ENCODE measurements at regions of chr5 and their contacts with region 1.

Region 1: GRCh38 chr5:69189162-69190086 is at the start of gene CENPH:
- DNase-seq: peak; percentile 88 to 92
- ATAC-seq: peak; percentile 97 to 100 (median 98)
- H3K4me3 ChIP-seq: peak within 1 kb of the TSS; percentile 84
- H3K27ac ChIP-seq: peak within 1 kb of the TSS; percentile 57
- H3K4me1 ChIP-seq: peaks cover 6% of the 10 kb centered on the region
- H3K27me3 ChIP-seq: no peaks in the 10 kb centered on the region
- CTCF ChIP-seq: no peak
- total RNA-seq, gene CENPH: 1.6 to 4.5 (median 2.8) TPM

Region 2: DNA sequence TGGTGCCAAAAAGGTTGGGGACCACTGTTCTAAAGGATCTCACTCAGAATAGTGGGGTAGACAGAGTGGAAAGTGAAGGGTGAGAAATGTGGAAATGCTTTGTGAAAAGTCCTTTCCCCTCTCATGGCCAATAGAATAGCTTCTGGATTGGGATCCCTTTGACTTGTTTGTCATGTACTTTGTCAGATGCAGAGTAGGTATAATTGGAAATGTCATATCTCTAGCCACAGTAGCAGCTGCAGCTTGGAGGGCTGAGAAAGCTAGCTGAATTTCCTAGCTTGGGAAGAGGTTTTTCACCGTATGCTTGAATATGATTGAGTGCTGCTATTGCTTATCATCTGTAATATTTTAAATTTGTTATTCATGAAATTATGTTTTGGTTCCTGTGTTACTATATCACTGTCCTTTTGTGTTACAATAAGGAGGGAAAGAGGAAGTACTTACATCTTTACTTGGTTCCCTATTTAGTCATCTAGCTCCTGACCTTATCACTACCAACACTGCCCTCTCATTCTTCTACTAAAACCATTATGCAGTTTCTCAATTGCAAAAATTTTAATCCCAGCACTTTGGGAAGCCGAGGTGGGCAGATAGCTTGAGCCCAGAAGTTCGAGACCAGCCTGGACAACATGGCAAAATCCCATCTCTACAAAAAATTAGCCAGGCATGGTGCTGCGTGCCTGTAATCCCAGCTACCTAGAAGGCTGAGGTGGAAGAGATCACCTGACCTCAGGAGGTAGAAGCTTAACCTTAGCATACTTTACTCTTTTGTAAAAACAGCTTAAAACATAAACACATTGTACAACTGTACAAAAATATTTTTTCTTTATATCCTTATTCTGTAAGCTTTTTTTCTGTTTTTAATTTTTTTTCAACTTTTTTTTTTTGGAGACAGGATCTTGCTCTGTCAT is 83.2 kb before region 1 on chr5:
- intact Hi-C with region 1: loop called in 1 of 2 experiments (anchors 10 kb)
- DNase-seq: no peak
- ATAC-seq: no peak
- H3K4me3 ChIP-seq: no peak overlapping the region
- H3K27ac ChIP-seq: no peak overlapping the region
- H3K4me1 ChIP-seq: no peaks in the 10 kb centered on the region
- H3K27me3 ChIP-seq: no peaks in the 10 kb centered on the region
- CTCF ChIP-seq: no peak

Region 3: DNA sequence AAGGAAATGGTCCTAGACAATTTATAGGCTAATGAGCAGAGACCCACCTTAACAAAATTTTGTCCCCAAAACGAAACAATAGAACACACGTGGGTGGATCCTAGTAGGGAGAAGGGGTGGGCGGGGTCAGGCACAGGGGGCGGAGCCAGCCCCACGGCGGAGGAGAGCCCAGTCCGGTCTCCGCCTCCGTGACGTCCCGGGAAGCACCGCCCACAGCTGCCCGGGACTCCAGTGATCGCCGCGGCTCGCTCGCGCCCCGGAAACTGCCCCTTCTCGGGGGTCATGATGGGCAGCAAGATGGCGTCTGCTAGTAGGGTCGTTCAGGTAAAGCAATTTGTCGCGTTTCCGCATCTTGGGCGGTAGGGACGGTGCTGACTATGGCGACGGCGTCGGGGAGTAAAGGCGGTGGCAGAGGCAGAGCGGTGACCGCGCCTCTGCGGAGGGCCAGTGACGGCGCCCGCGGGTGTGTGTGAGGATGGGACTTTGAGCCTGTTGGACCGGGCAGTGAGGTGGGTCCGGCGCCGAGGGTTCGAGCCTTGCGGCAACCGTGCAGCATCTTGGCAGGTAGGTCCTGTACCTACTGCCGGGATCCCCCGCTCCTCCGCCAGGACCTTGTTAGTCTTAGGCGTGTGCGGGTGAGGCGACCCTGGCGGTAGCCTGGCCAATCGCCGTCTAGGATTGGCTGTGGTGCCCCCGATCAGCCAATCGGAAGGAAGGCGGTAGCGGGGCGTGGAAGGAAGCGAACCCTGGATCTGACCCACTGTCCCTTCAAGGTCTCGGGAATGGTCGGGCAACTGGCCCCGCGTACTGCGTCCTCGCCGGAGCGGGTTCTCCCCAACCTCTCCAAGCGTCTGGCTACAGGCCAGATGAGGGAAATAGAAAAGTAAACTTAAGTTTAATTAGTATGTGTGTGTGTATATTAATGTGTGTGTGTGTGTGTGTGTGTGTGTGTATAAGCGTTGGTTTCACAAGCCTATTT is 28.4 kb after region 1 on chr5:
- intact Hi-C with region 1: loop called in 1 of 2 experiments (anchors 2 kb)
- DNase-seq: peak; percentile 98
- ATAC-seq: peak; percentile 98 to 99 (median 98)
- H3K4me3 ChIP-seq: peak overlapping the region; percentile 92
- H3K27ac ChIP-seq: peak overlapping the region; percentile 91
- H3K4me1 ChIP-seq: peaks cover 14% of the 10 kb centered on the region
- H3K27me3 ChIP-seq: no peaks in the 10 kb centered on the region
- CTCF ChIP-seq: peak; percentile 26

Region 4: DNA sequence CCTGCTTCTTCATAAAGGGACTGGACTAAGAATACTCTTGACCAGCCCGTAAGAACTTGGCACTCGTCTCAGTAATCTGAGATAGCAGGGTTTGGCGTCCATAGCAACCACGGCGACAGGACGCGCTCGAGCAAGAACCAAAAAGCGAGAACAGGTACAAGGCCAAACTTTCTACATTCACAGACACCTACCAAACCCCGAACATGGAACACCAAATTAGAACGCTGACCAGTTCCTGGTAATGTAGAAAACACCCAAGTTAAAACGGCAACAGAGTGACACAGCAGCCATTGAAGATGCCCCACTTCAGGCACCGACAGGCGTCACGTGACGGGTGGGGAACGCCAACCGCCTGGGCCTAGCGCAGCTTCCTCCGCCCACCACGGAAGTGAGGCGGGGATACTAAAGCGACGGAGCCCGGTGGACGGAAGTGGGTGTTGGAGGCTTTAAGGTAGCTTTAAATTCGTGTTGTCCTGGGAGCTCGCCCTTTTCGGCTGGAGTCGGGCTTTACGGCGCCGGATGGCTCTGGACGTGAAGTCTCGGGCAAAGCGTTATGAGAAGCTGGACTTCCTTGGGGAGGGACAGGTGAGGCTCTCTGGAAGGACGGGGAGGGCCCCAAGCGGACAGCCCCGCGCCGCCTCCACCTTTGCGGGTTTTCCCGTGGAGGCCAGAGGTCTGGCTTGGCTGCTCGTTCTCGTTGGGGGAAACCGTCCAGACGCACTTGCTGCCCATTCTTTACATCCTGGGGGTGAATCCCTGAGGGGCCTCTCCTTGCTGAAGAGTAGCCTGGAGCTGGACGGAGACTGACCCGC is 45.2 kb after region 1 on chr5 and contains the start of gene CDK7:
- intact Hi-C with region 1: loop called in 1 of 2 experiments (anchors 1 kb)
- DNase-seq: peak; percentile 95 to 98
- ATAC-seq: peak; percentile 99
- H3K4me3 ChIP-seq: peak within 1 kb of the TSS; percentile 85
- H3K27ac ChIP-seq: peak within 1 kb of the TSS; percentile 92
- H3K4me1 ChIP-seq: peaks cover 29% of the 10 kb centered on the region
- H3K27me3 ChIP-seq: no peaks in the 10 kb centered on the region
- CTCF ChIP-seq: no peak
- total RNA-seq, gene CDK7: 19.0 to 33.4 (median 29.4) TPM

Region 5: GRCh38 chr5:69250598-69250997 is 61.2 kb after region 1 on chr5:
- intact Hi-C with region 1: no loop called
- DNase-seq: no peak
- ATAC-seq: no peak
- H3K4me3 ChIP-seq: no peak overlapping the region
- H3K27ac ChIP-seq: no peak overlapping the region
- H3K4me1 ChIP-seq: no peaks in the 10 kb centered on the region
- H3K27me3 ChIP-seq: no peaks in the 10 kb centered on the region
- CTCF ChIP-seq: no peak